Activated B cell treated with CpG ODN at 0.5 μM for 24 hours (primary cell): ENCODE measurements at regions of chr4 and their contacts with region 1.

Region 1: GRCh38 chr4:37452952-37453280 is 208.4 kb downstream of the NWD2 start:
- DNase-seq: no peak
- ATAC-seq: no peak
- H3K4me3 Mint-ChIP-seq: peak overlapping the region; percentile 69
- H3K27ac Mint-ChIP-seq: no peak overlapping the region
- H3K4me1 Mint-ChIP-seq: peaks cover 14% of the 10 kb centered on the region
- H3K27me3 Mint-ChIP-seq: peaks cover 58% of the 10 kb centered on the region
- CTCF ChIP-seq: no peak

Region 2: DNA sequence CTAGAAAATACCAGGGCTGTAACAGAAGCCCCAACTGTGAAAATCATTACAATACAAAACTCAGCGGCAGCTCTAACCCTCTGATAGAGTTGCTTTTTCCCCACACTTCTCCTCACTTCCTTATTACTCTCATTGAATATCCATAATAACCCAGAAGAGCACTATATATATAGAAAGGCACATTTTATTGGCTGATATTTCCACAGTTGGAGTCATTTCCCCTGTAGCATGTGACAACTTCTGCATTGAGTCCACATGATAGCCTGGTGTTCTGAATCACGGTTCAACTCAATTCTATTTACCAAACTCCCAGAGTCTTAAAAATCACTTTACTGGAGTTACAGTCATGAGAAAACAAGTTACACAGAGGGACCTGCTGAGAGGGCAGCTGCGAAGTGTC is 255.0 kb before region 1 on chr4:
- CTCF ChIA-PET with region 1: no interaction called
- POLR2A ChIA-PET with region 1: no interaction called
- intact Hi-C with region 1: no loop called
- DNase-seq: no peak
- ATAC-seq: no peak
- H3K4me3 Mint-ChIP-seq: no peak overlapping the region
- H3K27ac Mint-ChIP-seq: no peak overlapping the region
- H3K4me1 Mint-ChIP-seq: no peaks in the 10 kb centered on the region
- H3K27me3 Mint-ChIP-seq: no peaks in the 10 kb centered on the region
- CTCF ChIP-seq: no peak

Region 3: DNA sequence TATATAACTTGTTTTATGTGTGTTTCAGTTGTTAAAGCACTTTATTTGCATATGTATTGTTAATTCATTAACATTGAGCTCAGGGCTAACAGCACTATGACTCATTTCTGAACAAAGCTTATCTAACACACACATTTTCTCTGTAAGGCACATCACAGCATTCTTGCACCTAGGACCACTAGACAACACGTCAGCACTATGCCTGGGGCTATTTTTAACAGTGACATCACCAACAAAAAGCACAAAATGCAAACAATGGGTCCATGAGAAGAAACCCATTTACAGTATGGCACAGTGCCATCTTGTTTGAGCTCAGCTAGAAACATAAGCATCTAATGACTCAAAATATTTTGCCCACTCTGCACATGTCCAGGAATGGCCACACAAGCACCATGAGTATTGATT is 108.9 kb after region 1 on chr4:
- CTCF ChIA-PET with region 1: interaction called, 12 read pairs
- POLR2A ChIA-PET with region 1: no interaction called
- intact Hi-C with region 1: loop called (anchors 1 kb)
- DNase-seq: no peak
- ATAC-seq: no peak
- H3K4me3 Mint-ChIP-seq: no peak overlapping the region
- H3K27ac Mint-ChIP-seq: no peak overlapping the region
- H3K4me1 Mint-ChIP-seq: no peaks in the 10 kb centered on the region
- H3K27me3 Mint-ChIP-seq: peaks cover 5% of the 10 kb centered on the region
- CTCF ChIP-seq: no peak

Region 4: GRCh38 chr4:37567841-37568240 is 114.9 kb after region 1 on chr4:
- CTCF ChIA-PET with region 1: interaction called, 12 read pairs
- POLR2A ChIA-PET with region 1: no interaction called
- intact Hi-C with region 1: loop called (anchors 1 kb)
- DNase-seq: no peak
- ATAC-seq: no peak
- H3K4me3 Mint-ChIP-seq: no peak overlapping the region
- H3K27ac Mint-ChIP-seq: no peak overlapping the region
- H3K4me1 Mint-ChIP-seq: peaks cover 2% of the 10 kb centered on the region
- H3K27me3 Mint-ChIP-seq: no peaks in the 10 kb centered on the region
- CTCF ChIP-seq: no peak

Region 5: DNA sequence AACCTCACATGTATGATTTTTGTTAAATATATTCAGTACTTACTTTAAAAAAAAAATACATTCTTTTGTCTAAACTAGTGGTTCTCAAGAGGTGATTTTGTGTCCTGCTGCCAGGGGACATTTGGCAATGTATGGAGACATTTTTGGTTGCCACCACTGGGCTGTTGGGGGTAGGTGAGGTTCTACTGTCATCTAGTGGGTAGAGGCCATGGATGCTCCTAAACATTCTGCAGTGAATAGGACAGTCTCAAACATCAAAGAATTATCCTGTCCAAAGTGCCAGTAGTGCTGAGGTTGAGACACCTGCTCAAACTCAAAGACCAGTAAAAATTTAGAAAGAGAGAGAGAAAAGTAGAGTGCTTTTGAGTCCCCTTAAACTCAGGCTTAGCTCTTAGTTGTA is 340.6 kb after region 1 on chr4:
- CTCF ChIA-PET with region 1: no interaction called
- POLR2A ChIA-PET with region 1: no interaction called
- intact Hi-C with region 1: loop called (anchors 1 kb)
- DNase-seq: no peak
- ATAC-seq: peak; percentile 47
- H3K4me3 Mint-ChIP-seq: no peak overlapping the region
- H3K27ac Mint-ChIP-seq: no peak overlapping the region
- H3K4me1 Mint-ChIP-seq: no peaks in the 10 kb centered on the region
- H3K27me3 Mint-ChIP-seq: peaks cover 3% of the 10 kb centered on the region
- CTCF ChIP-seq: no peak